ENCODE measurements at regions of chr9 and their contacts with region 1.

Region 1: DNA sequence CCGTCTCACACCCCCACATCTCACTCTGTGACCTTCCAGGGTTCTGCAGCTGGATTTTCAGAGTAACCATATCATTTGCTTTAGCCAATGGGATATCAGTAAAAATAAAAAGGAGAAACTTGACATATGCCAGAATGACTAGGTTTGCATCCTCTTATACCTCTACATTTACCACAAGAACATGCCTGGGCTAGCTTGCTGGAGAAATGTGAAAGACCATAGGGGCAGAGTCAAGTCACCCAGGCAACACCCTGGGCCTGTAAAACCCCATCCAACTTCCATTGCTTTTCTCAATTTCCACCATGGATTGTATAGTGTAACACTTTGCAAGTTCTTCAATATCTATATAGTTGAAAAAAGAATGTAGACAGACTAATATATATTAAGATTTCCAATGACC is 731.1 kb downstream of the PTPRD start:
- DNase-seq: no peak
- ATAC-seq: no peak
- H3K4me3 ChIP-seq: no peak overlapping the region
- H3K4me3 Mint-ChIP-seq: no peak overlapping the region
- H3K27ac ChIP-seq: no peak overlapping the region
- H3K27ac Mint-ChIP-seq: no peak overlapping the region
- H3K4me1 ChIP-seq: no peaks in the 10 kb centered on the region
- H3K4me1 Mint-ChIP-seq: no peaks in the 10 kb centered on the region
- H3K27me3 ChIP-seq: no peaks in the 10 kb centered on the region
- H3K27me3 Mint-ChIP-seq: no peaks in the 10 kb centered on the region
- CTCF ChIP-seq: no peak

Region 2: GRCh38 chr9:9387511-9388115 is 494.1 kb before region 1 on chr9:
- CTCF ChIA-PET with region 1: no interaction called
- POLR2A ChIA-PET with region 1: no interaction called
- intact Hi-C with region 1: no loop called
- DNase-seq: no peak
- ATAC-seq: no peak
- H3K4me3 ChIP-seq: no peak overlapping the region
- H3K4me3 Mint-ChIP-seq: no peak overlapping the region
- H3K27ac ChIP-seq: no peak overlapping the region
- H3K27ac Mint-ChIP-seq: no peak overlapping the region
- H3K4me1 ChIP-seq: no peaks in the 10 kb centered on the region
- H3K4me1 Mint-ChIP-seq: no peaks in the 10 kb centered on the region
- H3K27me3 ChIP-seq: no peaks in the 10 kb centered on the region
- H3K27me3 Mint-ChIP-seq: no peaks in the 10 kb centered on the region
- CTCF ChIP-seq: no peak

Region 3: DNA sequence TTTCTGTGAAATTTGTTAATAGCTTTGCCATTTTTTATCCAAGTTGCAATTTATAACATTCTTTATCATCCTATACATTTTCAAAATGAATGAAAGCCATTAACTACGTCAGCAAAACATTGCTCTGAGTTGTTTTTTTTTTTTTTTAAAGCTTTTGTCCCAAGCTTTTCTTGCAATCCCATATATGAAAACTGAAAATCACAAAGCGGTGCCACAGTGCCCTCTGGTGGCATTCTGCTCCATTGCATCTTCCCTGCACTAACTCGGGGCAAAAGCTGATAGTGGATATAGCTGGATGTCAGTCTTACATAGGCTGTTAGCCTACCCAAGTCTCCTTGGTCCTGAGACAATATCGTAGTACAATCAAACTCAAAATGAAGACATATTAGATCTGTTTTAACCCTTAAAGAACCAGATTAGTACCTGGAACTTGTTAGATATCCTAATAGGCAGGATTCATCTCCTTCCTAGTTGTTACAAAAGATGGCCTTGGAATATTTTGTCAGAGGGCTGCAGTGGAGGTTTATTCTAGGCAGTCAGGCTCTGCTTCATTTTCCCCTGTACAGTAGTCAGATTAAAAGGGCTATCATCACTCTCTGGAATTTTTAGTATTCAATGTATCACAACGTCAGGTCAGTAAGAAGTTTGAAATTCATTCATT is 61.2 kb after region 1 on chr9:
- CTCF ChIA-PET with region 1: no interaction called
- POLR2A ChIA-PET with region 1: no interaction called
- intact Hi-C with region 1: loop called in 1 of 2 experiments (anchors 10 kb)
- DNase-seq: peak; percentile 2 to 59 (median 29)
- ATAC-seq: peak; percentile 55
- H3K4me3 ChIP-seq: no peak overlapping the region
- H3K4me3 Mint-ChIP-seq: no peak overlapping the region
- H3K27ac ChIP-seq: no peak overlapping the region
- H3K27ac Mint-ChIP-seq: no peak overlapping the region
- H3K4me1 ChIP-seq: no peaks in the 10 kb centered on the region
- H3K4me1 Mint-ChIP-seq: no peaks in the 10 kb centered on the region
- H3K27me3 ChIP-seq: no peaks in the 10 kb centered on the region
- H3K27me3 Mint-ChIP-seq: no peaks in the 10 kb centered on the region
- CTCF ChIP-seq: peak; percentile 96

Region 4: DNA sequence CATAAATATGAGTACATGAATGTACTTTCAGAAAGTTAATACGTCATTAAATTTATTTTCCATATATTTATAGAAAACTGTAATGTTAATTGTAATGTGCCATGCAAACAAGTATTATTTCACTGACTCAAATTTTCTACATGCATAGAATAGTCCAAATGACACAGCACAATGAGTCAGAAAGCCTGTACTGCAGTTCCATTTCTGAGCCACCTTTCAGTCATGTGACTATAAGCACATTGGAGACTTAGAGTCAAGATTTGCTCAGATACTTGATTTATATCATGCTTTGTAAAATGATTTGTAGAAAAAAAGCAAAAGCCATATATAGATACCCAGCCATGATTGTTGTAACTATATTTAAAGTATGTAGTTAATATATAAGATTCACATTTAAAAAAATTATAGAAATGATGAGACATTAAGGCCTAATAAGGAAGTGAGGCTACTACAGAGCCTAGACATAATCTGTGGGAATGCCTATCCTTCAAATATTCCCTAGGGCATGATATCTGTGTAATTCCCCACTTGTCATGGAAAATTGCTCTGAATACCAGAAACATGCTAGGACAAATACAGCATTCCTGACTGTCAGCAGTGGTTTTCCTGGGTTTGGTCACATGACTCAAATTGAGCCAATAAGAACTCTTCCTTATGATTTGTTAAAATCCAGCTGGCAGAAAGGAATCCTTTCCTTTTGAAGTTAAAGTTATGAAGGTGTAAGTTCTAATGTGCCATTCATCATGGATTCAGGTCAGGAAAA is 681.1 kb after region 1 on chr9:
- CTCF ChIA-PET with region 1: no interaction called
- POLR2A ChIA-PET with region 1: no interaction called
- intact Hi-C with region 1: no loop called
- DNase-seq: no peak
- ATAC-seq: no peak
- H3K4me3 ChIP-seq: no peak overlapping the region
- H3K4me3 Mint-ChIP-seq: no peak overlapping the region
- H3K27ac ChIP-seq: no peak overlapping the region
- H3K27ac Mint-ChIP-seq: no peak overlapping the region
- H3K4me1 ChIP-seq: no peaks in the 10 kb centered on the region
- H3K4me1 Mint-ChIP-seq: no peaks in the 10 kb centered on the region
- H3K27me3 ChIP-seq: no peaks in the 10 kb centered on the region
- H3K27me3 Mint-ChIP-seq: no peaks in the 10 kb centered on the region
- CTCF ChIP-seq: no peak

Measured in CD8-positive, alpha-beta T cell (primary cell).